ENCODE measurements at regions of chr11 and their contacts with region 1.

Region 1: DNA sequence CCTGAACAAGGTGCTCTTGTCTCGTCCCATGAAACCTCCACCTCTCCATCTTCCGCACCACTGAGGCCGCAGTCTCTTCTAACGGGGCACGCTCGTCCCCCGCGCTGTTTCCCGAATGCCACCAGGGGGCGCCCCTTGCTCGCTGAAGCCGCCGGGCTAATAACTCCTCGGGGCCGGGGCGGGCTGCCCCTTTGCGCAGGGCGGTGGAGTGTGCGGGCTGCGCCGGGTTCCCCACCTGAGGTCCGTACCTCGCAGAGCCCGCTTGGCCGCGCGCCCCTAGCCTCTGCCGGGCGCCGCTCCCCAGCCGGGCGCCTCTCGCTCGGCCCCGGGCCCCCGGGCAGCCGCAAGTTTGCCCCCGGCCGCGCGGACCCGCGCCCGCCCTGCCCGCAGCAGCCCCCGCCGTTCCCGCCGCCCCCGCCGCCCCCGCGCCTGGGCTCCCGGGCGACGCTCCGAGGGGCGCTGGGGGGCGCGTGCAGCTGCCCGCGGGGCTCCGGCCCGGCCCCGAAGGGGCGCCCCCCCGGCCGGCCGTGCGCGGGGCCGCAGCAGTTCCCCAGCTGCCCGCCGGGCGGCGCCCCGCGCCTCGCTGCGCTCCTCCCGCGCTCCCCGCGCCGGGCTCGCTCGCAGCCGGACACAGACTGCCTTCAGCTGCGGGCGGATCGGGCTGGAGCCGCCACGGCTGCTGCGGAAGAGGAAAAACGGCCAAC is at the start of gene GRIK4:
- DNase-seq: peak; percentile 81
- H3K4me3 Mint-ChIP-seq: no peak within 1 kb of the TSS
- H3K27ac Mint-ChIP-seq: no peak within 1 kb of the TSS
- H3K4me1 Mint-ChIP-seq: peaks cover 4% of the 10 kb centered on the region
- H3K27me3 Mint-ChIP-seq: peaks cover 73% of the 10 kb centered on the region
- total RNA-seq, gene GRIK4: not detected

Region 2: GRCh38 chr11:120682866-120683265 is 171.6 kb after region 1 on chr11:
- CTCF ChIA-PET with region 1: interaction called, 59 read pairs
- POLR2A ChIA-PET with region 1: no interaction called
- intact Hi-C with region 1: loop called (anchors 1 kb)
- DNase-seq: no peak
- H3K4me3 Mint-ChIP-seq: no peak overlapping the region
- H3K27ac Mint-ChIP-seq: no peak overlapping the region
- H3K4me1 Mint-ChIP-seq: no peaks in the 10 kb centered on the region
- H3K27me3 Mint-ChIP-seq: peaks cover 17% of the 10 kb centered on the region

Region 3: GRCh38 chr11:120688163-120688562 is 176.9 kb after region 1 on chr11:
- CTCF ChIA-PET with region 1: interaction called, 59 read pairs
- POLR2A ChIA-PET with region 1: no interaction called
- intact Hi-C with region 1: loop called (anchors 1 kb)
- DNase-seq: no peak
- H3K4me3 Mint-ChIP-seq: no peak overlapping the region
- H3K27ac Mint-ChIP-seq: no peak overlapping the region
- H3K4me1 Mint-ChIP-seq: no peaks in the 10 kb centered on the region
- H3K27me3 Mint-ChIP-seq: peaks cover 20% of the 10 kb centered on the region

Region 4: DNA sequence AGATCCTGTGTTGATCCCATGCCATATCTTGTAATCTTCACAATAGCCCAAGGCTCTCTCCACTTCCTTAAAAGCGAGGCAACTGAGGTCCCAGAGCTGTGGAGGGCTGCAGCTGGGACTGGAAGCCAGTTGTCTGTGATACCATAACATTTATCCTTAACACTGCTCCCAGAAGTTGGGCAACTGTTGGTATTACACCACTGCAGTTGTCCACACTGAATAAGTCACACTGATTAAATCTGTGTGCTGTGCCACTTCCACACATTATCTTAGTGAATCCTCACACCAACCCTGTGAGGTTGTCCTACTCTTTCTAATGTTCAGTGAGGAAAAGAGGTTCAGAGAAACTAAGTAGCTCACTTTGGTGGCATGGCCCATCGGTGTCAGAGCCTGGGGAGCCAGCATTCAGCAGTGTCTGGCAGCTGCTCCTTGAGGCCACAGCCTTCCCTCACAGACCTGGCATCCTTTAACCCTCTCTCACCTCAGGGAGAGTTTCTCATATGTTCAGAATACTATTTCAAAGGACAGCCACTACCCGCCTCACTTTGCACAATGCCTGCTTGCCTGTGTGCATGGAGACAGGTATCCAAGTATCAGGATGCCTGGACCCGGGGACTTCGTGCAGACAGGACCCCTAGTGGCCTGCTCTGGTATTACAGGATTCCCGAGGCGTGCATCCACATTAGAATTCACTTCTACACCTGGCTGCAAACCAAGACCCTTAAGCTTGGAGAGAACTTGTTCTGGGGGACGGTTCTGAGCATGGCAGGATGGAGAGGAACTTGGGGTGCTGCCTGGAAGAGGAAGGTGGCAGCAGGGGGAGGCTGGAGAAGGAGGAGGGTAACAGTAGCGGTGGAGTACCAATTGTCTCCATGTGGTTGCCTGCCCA is 290.8 kb after region 1 on chr11:
- CTCF ChIA-PET with region 1: interaction called, 4 read pairs
- POLR2A ChIA-PET with region 1: no interaction called
- intact Hi-C with region 1: loop called (anchors 1 kb)
- DNase-seq: peak; percentile 55
- H3K4me3 Mint-ChIP-seq: no peak overlapping the region
- H3K27ac Mint-ChIP-seq: no peak overlapping the region
- H3K4me1 Mint-ChIP-seq: no peaks in the 10 kb centered on the region
- H3K27me3 Mint-ChIP-seq: peaks cover 9% of the 10 kb centered on the region

Region 5: GRCh38 chr11:120929664-120930154 is 418.4 kb after region 1 on chr11:
- CTCF ChIA-PET with region 1: interaction called, 3 read pairs
- POLR2A ChIA-PET with region 1: no interaction called
- intact Hi-C with region 1: loop called (anchors 1 kb)
- DNase-seq: peak; percentile 57
- H3K4me3 Mint-ChIP-seq: no peak overlapping the region
- H3K27ac Mint-ChIP-seq: no peak overlapping the region
- H3K4me1 Mint-ChIP-seq: no peaks in the 10 kb centered on the region
- H3K27me3 Mint-ChIP-seq: no peaks in the 10 kb centered on the region

Region 6: DNA sequence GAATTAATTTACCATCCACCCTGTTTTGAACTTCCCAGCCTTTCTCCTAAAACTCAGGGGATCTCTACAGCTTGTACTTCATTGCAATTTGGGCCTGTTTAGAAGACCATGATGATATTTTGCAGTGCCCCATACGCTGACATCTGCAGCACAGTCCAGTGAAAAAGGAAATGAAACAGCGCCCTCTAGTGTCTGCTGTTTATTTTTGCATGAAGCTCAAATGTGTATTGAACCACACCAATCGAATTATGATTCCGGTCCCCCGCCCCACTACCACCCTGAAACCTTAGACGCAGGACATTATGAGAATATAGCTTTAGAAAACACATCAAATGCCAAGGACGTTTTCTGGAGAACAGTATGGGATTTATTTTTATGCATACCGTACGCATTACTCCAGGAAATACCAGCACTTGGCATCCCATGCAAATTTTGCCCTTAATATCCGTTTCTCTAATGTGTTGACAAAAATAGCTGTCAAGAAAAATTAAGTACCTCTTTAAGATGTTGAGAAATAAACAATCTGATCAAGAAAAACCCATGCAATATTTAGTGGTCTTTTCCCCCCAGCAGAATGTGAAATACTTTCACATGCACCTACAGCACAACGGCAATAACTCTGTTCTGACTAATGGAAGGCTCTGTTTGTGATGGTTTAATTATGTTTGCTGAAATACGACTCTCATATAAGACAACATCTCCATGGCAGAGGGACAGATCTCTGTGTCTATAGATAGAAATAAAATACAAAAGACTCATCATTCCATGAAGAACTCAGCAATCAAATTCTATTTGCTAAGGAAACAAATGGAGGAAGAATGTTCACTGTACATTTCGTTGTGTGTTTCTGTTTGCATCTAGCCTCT is 683.7 kb after region 1 on chr11:
- CTCF ChIA-PET with region 1: interaction called, 5 read pairs
- POLR2A ChIA-PET with region 1: no interaction called
- intact Hi-C with region 1: loop called (anchors 2 kb)
- DNase-seq: peak; percentile 53
- H3K4me3 Mint-ChIP-seq: no peak overlapping the region
- H3K27ac Mint-ChIP-seq: no peak overlapping the region
- H3K4me1 Mint-ChIP-seq: peaks cover 3% of the 10 kb centered on the region
- H3K27me3 Mint-ChIP-seq: peaks cover 16% of the 10 kb centered on the region

Measured in activated CD4-positive, alpha-beta memory T cell treated with anti-CD3 and anti-CD28 coated beads for 36 hours (primary cell).